Sigmoid colon (tissue), 7 donors: ENCODE measurements at regions of chr1 and their contacts with region 1.

Region 1: DNA sequence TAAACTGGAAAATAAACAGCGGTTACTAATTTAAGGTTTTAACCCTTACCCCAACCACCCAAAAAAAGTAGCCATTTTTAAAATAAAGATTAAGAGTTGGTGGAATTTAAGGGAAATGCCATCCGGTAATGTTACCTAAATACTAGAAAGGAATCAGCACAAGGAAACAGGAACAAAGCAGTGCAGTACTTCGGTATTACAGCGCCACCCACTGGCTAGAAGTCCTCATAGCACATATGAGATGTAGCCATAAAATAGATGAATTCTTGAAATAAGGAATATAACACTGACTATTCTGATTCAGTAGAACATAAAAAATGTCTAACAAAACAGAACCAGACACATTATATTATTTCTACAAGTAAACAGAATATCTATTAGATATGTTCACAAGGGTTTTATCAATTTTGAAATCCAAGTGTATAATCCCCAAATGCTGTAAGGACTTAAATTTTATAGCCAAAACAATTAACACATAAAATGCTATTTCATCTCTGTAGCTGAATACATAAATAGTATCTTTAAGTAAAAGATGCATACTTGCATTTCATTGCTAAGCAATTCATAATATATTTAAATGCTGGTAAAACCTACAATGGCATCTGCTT is 58.8 kb downstream of the FRRS1 start:
- DNase-seq: peak; percentile 74
- H3K4me3 ChIP-seq: no peak overlapping the region
- H3K27ac ChIP-seq: no peak overlapping the region
- H3K4me1 ChIP-seq: no peaks in the 10 kb centered on the region
- H3K27me3 ChIP-seq: no peaks in the 10 kb centered on the region
- CTCF ChIP-seq: peak; percentile 11 to 72 (median 66)
- EP300 ChIP-seq: no peak
- POLR2A ChIP-seq: no peak

Region 2: DNA sequence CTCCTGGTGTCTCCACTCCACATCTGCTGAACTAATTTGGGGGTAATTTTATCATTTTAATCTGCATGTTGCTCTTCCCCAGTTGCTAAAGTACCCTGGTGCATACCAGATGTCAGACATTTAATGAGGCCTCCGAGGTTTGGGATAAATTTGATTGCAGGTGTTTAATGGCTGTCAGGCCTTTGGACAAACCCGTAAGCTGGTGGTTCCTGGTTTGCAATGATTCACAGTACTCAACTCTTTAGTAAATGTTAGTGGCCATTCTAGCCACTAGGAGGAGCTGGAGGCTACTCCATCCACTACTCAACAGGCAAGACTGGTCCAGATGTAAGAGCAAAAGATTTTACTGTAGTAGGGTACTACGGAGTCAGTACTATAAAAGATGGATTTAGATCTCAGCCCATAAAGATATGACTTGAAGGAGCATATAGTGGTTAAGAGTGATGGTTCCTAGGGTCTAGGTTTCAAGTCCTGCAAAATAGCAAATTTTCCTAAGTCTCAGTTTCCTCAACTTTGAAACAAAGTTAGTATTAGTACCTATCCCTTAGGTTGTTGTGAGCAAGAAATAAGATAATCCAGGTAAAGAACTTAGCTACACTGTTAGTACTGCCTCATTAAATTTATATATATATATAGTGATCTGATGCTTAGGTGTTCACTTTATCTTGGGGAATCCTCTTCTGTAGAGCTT is 913.3 kb before region 1 on chr1:
- intact Hi-C with region 1: loop called (anchors 10 kb)
- DNase-seq: no peak
- H3K4me3 ChIP-seq: no peak overlapping the region
- H3K27ac ChIP-seq: no peak overlapping the region
- H3K4me1 ChIP-seq: no peaks in the 10 kb centered on the region
- H3K27me3 ChIP-seq: no peaks in the 10 kb centered on the region
- CTCF ChIP-seq: peak in 3 of 4 experiments; percentile 10 to 51 (median 39)
- EP300 ChIP-seq: no peak
- POLR2A ChIP-seq: no peak

Region 3: DNA sequence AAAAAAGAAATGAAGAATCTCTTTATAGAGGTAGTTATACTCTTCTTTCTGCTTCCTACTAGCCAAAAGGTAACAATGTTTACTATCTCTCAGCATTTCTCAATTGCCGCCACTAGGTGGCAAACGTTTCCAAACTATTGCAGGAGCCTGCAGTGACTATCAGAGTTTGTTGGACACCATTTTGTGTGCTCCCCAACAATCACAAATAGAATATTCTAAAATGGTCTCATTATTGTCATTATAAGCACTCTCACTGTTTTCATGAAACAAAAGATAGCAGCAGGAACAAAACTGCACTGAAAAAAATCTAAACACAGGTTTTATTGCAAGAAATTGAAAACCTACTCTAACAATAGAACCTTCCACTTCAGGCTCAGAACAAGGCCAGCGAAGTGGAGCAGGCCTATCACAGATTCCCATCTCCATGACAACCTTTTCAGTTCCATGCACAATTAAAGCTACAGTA is 527.3 kb before region 1 on chr1:
- intact Hi-C with region 1: loop called (anchors 2 kb)
- DNase-seq: peak; percentile 72
- H3K4me3 ChIP-seq: no peak overlapping the region
- H3K27ac ChIP-seq: peak overlapping the region in 2 of 4 donors; percentile 6 to 36
- H3K4me1 ChIP-seq: peaks cover 0 to 17% (median 4%) of the 10 kb centered on the region in 4 donors
- H3K27me3 ChIP-seq: no peaks in the 10 kb centered on the region
- CTCF ChIP-seq: peak in 3 of 4 experiments; percentile 61 to 74 (median 70)
- EP300 ChIP-seq: no peak
- POLR2A ChIP-seq: no peak

Region 4: GRCh38 chr1:99481391-99481996 is 226.1 kb before region 1 on chr1:
- intact Hi-C with region 1: loop called (anchors 10 kb)
- DNase-seq: no peak
- H3K4me3 ChIP-seq: no peak overlapping the region
- H3K27ac ChIP-seq: no peak overlapping the region
- H3K4me1 ChIP-seq: no peaks in the 10 kb centered on the region
- H3K27me3 ChIP-seq: no peaks in the 10 kb centered on the region
- CTCF ChIP-seq: peak in 3 of 4 experiments; percentile 53 to 65 (median 61)
- EP300 ChIP-seq: no peak
- POLR2A ChIP-seq: no peak

Region 5: DNA sequence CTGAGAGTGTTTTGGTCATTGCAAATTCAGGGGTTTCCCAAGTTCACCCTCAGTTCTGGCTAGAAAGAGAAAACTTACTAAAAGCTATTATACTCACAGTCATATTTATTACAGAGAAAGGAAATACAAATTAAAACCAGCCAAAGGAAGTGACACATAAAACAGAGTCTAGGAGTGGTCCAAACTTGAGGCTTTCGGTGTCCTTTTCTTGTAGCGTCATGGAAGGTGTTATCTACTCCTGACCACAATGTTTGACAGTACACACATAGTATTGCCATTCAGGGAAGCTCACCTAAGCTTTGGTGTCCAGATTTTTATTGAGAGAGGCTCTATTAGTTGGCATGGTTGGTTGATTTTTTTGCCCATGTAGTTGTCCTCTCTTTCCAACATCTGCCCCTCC is 321.1 kb after region 1 on chr1:
- intact Hi-C with region 1: no loop called
- DNase-seq: no peak
- H3K4me3 ChIP-seq: no peak overlapping the region
- H3K27ac ChIP-seq: no peak overlapping the region
- H3K4me1 ChIP-seq: no peaks in the 10 kb centered on the region
- H3K27me3 ChIP-seq: no peaks in the 10 kb centered on the region
- CTCF ChIP-seq: no peak
- EP300 ChIP-seq: no peak
- POLR2A ChIP-seq: no peak